ENCODE measurements at regions of chr22 and their contacts with region 1.

Region 1: DNA sequence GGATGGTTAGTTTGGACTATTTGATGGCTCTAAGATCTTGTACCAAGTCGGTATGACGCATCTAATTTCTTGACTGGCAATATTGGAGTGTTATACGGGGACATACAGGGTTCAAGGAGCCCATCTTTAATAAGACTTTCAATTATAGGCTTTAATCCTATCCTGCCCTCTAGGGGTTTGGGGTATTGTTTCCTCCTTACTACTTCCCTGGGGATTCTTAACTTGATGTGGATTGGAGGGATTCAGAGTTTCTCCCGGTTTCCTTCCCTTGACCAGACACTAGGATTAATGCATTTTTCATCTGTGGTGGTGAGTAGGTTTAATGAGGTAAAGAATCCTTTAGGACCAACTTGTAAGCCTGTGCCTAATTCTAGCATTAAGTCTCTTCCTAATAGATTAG is 18.8 kb downstream of the CYP2D6 start:
- DNase-seq: no peak
- ATAC-seq: peak; percentile 49; the same call in 1 of the 2 replicates
- H3K4me3 Mint-ChIP-seq: no peak overlapping the region
- H3K27ac Mint-ChIP-seq: no peak overlapping the region; the same call in 1 of the 2 replicates
- H3K4me1 Mint-ChIP-seq: peaks cover 7% of the 10 kb centered on the region
- H3K27me3 Mint-ChIP-seq: peaks cover 33% of the 10 kb centered on the region
- CTCF ChIP-seq: no peak

Region 2: GRCh38 chr22:41951898-41952474 is 159.8 kb before region 1 on chr22 and contains the start of gene SMIM45:
- CTCF ChIA-PET with region 1: interaction called, 16 read pairs
- POLR2A ChIA-PET with region 1: interaction called, 3 read pairs
- DNase-seq: peak; percentile 58
- ATAC-seq: peak; percentile 47
- H3K4me3 Mint-ChIP-seq: no peak within 1 kb of the TSS
- H3K27ac Mint-ChIP-seq: 0 out of 2 replicates have a peak within 1 kb of the TSS, but pooled peaks have one; percentile 32
- H3K4me1 Mint-ChIP-seq: peaks cover 26% of the 10 kb centered on the region
- H3K27me3 Mint-ChIP-seq: peaks cover 8% of the 10 kb centered on the region
- CTCF ChIP-seq: no peak

Region 3: GRCh38 chr22:41966607-41967240 is 145.1 kb before region 1 on chr22:
- CTCF ChIA-PET with region 1: interaction called, 78 read pairs
- POLR2A ChIA-PET with region 1: interaction called, 3 read pairs
- DNase-seq: peak; percentile 40
- ATAC-seq: peak; percentile 80
- H3K4me3 Mint-ChIP-seq: no peak overlapping the region
- H3K27ac Mint-ChIP-seq: 0 out of 2 replicates have a peak overlapping the region, but pooled peaks have one; percentile 9
- H3K4me1 Mint-ChIP-seq: peaks cover 18% of the 10 kb centered on the region
- H3K27me3 Mint-ChIP-seq: peaks cover 29% of the 10 kb centered on the region
- CTCF ChIP-seq: no peak

Region 4: GRCh38 chr22:42052765-42053164 is 59.0 kb before region 1 on chr22:
- CTCF ChIA-PET with region 1: no interaction called
- POLR2A ChIA-PET with region 1: no interaction called
- DNase-seq: no peak
- ATAC-seq: no peak
- H3K4me3 Mint-ChIP-seq: no peak overlapping the region
- H3K27ac Mint-ChIP-seq: no peak overlapping the region
- H3K4me1 Mint-ChIP-seq: no peaks in the 10 kb centered on the region
- H3K27me3 Mint-ChIP-seq: peaks cover 15% of the 10 kb centered on the region
- CTCF ChIP-seq: no peak